ENCODE measurements at regions of chr4 and their contacts with region 1.

Region 1: DNA sequence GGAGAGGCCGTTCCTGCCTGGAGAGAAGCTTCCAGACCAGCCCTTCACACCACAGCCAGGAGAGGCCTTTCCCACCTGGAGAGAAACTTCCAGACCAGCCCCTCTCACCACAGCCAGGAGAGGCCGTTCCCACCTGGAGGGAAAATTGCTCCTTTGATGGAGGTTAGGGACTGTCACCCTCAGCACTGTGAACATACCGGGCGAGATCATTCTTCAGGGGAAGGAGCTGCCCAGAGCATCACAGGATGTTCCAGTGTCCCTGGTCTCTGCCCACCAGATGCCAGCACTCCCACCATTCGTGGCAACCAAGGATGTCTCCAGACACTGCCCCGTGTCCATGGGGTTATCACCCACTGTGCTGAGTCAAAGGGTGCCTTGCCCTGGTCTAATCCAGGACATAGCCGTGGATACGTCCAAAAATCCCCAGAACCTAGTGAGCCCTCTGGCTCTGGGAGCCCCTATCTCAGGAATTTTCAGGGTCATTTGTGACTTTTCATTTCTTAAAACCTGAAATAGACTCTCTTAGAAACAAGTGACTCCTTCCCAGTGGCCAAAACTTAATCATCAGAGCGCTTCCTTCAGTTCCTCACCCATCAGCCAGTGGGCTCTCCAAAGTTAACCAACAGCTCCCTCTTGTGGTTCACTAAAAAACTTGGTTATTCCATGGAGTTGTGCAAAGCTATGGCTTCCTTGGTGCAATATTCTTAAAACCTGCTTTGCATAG is 80.2 kb downstream of the CRMP1 start:
- DNase-seq: peak; percentile 64
- H3K4me3 ChIP-seq: no peak overlapping the region
- H3K27ac ChIP-seq: peak overlapping the region in 3 of 4 donors; percentile 43 to 67 (median 59)
- H3K4me1 ChIP-seq: peaks cover 0 to 8% (median 0%) of the 10 kb centered on the region in 4 donors
- H3K27me3 ChIP-seq: no peaks in the 10 kb centered on the region
- CTCF ChIP-seq: peak; percentile 29 to 69 (median 60)
- EP300 ChIP-seq: no peak
- POLR2A ChIP-seq: no peak

Region 2: DNA sequence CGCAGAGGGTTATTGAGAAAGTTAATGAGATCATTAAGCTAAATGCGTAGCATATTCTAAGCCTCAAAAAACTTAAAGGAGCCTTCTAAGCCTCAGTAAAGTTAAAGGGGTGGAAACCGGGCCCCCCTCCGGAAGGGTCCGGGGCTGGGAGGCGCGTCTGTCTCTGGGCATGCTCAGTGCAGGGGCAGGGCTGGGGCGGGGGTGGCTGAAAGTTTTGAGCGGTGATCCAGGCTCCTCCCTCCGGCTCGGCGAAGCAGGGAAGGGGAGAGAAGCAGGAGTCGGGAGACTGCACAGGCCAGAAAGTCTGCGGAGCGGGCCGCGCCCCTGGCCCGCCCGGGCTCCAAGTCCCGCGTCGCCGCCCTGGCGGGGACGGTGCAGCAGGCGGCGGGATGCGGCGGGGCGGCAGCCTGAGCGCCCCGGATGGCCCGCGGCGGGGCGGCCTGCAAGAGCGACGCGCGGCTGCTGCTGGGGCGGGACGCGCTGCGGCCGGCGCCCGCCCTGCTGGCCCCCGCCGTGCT is 101.6 kb before region 1 on chr4 and contains the start of gene EVC:
- intact Hi-C with region 1: loop called (anchors 2 kb)
- DNase-seq: peak; percentile 94
- H3K4me3 ChIP-seq: peak within 1 kb of the TSS; percentile 37 to 67 (median 57)
- H3K27ac ChIP-seq: peak within 1 kb of the TSS; percentile 83 to 92 (median 88)
- H3K4me1 ChIP-seq: peaks cover 0 to 50% (median 45%) of the 10 kb centered on the region in 4 donors
- H3K27me3 ChIP-seq: no peaks in the 10 kb centered on the region
- CTCF ChIP-seq: no peak
- EP300 ChIP-seq: no peak
- POLR2A ChIP-seq: no peak
- total RNA-seq, gene EVC: 15.6 to 35.2 (median 24.4) TPM

Region 3: DNA sequence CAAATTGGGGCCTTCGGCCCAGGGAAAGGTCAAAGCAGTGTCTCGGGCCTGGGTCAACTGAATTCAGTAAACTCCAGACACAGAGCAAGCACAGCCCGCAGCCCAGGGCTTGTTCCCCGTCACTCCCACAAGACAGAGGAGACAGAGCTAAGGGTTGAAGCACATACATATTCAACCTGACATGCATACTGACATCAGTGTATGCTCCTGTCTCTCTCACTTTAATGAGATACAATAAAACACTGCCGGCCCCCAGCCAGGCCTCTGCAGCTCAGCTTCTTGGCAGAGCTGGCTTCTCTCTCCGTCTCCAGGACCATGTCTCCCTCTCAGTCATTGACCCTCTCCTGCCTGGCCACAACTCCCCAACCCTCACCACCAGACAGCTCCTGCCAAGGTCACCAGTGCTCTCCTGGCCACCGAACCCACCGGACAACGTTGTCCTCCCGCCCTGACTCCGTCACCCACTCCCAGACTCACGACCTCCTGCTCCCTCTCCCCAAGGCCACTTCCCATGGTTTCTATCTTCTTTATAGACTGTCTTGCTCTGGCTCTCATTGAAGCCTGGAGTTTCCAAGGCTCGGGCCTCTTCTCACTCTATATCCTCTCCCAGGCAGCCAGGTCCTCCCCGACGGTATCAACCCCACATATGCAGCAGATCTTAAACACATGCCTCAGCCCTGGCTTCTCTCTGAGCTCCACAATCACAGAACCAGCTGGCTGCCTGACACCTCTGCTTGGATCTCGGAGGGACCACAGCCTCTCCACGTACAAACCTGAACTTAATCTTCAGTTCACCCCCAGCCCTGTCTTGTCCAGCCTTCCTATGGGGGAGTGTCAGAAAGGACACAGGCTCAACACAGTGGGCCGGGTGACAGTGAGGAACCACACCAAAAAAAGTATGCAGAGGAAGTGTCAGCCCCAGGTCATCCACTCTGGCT is 273.3 kb after region 1 on chr4:
- intact Hi-C with region 1: no loop called
- DNase-seq: peak; percentile 57
- H3K4me3 ChIP-seq: no peak overlapping the region
- H3K27ac ChIP-seq: no peak overlapping the region
- H3K4me1 ChIP-seq: no peaks in the 10 kb centered on the region
- H3K27me3 ChIP-seq: peaks cover 0 to 3% (median 0%) of the 10 kb centered on the region in 3 donors
- CTCF ChIP-seq: no peak
- EP300 ChIP-seq: no peak
- POLR2A ChIP-seq: no peak

Region 4: DNA sequence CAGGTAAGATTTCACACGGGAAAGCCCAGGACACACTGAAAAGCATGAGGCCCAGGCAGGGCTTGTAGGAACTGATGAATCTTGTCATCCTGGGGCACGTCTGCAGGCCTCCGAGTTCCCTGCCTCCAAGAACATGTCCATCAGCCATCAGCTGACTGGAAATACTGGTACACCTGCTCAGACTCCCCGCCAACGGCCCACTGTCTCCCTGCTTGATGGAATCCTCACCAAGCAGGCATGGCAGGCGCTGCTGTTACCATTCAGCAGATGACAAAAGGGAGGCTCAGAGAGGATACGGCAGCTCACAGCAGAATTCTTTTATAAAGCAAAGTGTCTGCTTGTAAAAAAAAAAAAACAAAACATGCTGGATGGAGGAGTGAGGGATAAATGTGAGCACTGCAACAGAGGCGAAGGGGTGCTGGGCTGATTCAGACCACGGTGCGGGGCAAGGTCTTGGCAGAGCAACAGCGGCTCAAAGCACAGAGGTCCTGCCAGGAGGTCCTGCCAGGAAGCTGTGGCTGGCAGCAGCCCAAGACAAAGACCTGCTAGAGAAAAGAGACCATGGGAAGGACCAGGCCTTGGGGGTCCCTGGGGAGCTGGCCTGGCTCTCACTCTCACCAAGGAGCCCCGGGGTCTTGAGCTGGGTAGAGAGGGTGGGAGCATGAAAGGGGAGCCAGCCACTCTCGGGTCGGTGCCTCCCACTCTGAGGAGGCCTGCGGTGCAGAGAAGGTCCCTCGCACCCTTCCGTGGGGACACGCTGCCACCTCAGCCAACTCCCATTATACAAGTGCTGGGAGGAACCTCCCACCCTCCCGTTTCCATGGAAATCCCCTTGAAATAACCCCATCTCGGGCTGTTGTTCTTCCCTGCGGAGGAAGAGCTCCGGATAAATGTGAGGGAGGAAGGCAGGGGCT is 634.1 kb after region 1 on chr4:
- intact Hi-C with region 1: no loop called
- DNase-seq: no peak
- H3K4me3 ChIP-seq: no peak overlapping the region
- H3K27ac ChIP-seq: no peak overlapping the region
- H3K4me1 ChIP-seq: peaks cover 0 to 16% (median 14%) of the 10 kb centered on the region in 4 donors
- H3K27me3 ChIP-seq: peaks cover 0 to 34% (median 3%) of the 10 kb centered on the region in 3 donors
- CTCF ChIP-seq: no peak
- EP300 ChIP-seq: no peak
- POLR2A ChIP-seq: no peak

Region 5: GRCh38 chr4:7358100-7358735 is 1545.5 kb after region 1 on chr4:
- intact Hi-C with region 1: no loop called
- DNase-seq: peak; percentile 76
- H3K4me3 ChIP-seq: no peak overlapping the region
- H3K27ac ChIP-seq: peak overlapping the region in 2 of 4 donors; percentile 11 to 54
- H3K4me1 ChIP-seq: peaks cover 0 to 24% (median 5%) of the 10 kb centered on the region in 4 donors
- H3K27me3 ChIP-seq: no peaks in the 10 kb centered on the region
- CTCF ChIP-seq: no peak
- EP300 ChIP-seq: no peak
- POLR2A ChIP-seq: no peak